Calu3 (cell line): ENCODE measurements at regions of chr12 and their contacts with region 1.

Region 1: GRCh38 chr12:28611115-28611435 is 420.8 kb downstream of the CCDC91 start:
- DNase-seq: peak; percentile 47
- H3K4me3 Mint-ChIP-seq: peak overlapping the region; percentile 42
- H3K27ac Mint-ChIP-seq: peak overlapping the region; percentile 96
- H3K4me1 Mint-ChIP-seq: peaks cover 35% of the 10 kb centered on the region
- H3K27me3 Mint-ChIP-seq: no peaks in the 10 kb centered on the region
- CTCF ChIP-seq: no peak

Region 2: GRCh38 chr12:28424965-28425364 is 186.1 kb before region 1 on chr12:
- CTCF ChIA-PET with region 1: no interaction called
- intact Hi-C with region 1: loop called (anchors 10 kb)
- DNase-seq: peak; percentile 54
- H3K4me3 Mint-ChIP-seq: peak overlapping the region; percentile 61
- H3K27ac Mint-ChIP-seq: peak overlapping the region; percentile 89
- H3K4me1 Mint-ChIP-seq: peaks cover 34% of the 10 kb centered on the region
- H3K27me3 Mint-ChIP-seq: no peaks in the 10 kb centered on the region
- CTCF ChIP-seq: no peak

Region 3: GRCh38 chr12:28578361-28578760 is 32.7 kb before region 1 on chr12:
- CTCF ChIA-PET with region 1: no interaction called
- intact Hi-C with region 1: loop called (anchors 5 kb)
- DNase-seq: no peak
- H3K4me3 Mint-ChIP-seq: no peak overlapping the region
- H3K27ac Mint-ChIP-seq: no peak overlapping the region
- H3K4me1 Mint-ChIP-seq: peaks cover 28% of the 10 kb centered on the region
- H3K27me3 Mint-ChIP-seq: no peaks in the 10 kb centered on the region
- CTCF ChIP-seq: no peak

Region 4: DNA sequence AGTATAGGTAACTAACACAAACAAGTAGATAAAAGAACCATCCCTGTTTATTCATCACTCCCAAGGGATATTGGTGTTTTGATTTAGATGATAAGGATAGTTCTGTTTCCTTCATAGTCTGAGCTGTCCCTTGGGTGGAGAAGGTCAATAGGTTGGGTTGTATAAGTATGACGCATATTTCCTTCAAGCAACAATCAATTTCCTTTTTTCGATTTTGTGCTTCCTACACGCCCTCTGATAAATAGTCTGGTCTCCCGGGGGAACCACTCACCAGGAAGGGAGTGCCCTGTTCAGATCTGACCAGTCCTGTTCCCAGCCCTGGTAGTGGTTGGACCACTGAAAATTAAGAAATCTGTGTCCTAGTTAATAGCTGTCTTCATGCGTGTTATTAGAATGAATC is 159.3 kb after region 1 on chr12:
- CTCF ChIA-PET with region 1: no interaction called
- intact Hi-C with region 1: loop called (anchors 10 kb)
- DNase-seq: peak; percentile 70
- H3K4me3 Mint-ChIP-seq: no peak overlapping the region
- H3K27ac Mint-ChIP-seq: peak overlapping the region; percentile 86
- H3K4me1 Mint-ChIP-seq: peaks cover 34% of the 10 kb centered on the region
- H3K27me3 Mint-ChIP-seq: no peaks in the 10 kb centered on the region
- CTCF ChIP-seq: no peak